ENCODE measurements at regions of chr2 and their contacts with region 1.

Region 1: DNA sequence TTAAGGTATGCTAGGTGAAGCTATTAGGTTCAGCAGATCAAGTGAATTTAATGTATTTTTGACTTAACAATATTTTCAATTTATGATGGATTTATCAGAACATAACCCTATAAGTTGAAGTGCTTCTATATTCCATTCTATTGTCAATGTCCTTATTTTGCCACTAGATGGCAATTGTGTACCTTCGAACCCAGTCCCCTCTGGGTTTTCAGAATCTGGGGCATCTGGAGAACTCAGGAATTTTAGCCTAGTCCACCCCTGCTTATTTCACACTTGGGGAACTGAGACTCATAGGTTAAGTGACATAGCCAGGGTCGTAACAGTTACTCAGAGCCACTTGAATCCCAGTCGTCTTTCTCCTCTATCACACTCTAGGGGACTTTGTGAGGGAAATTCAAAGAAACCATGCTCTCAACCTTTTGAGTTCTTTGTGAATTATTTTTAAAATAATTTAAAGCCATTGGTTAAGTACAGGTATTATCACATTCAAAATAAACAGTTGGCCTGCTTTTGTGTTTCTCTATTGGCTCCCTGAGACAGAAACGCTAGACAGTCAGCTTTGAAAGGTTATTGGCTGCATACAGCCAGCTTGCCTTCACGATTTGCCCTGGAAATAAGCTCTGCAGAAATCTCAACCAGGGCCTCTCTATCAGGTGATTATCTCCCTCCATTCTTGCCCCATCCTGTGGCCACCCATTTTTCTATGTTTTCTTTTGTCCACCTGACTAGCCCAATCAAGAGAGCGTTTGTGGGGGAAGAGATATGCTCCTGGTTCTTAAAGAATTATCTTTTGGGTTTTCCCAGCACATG is 145.0 kb downstream of the TTC27 start:
- DNase-seq: peak; percentile 75
- H3K4me3 ChIP-seq: no peak overlapping the region; a peak in 1 of 4 replicates
- H3K27ac ChIP-seq: no peak overlapping the region
- H3K4me1 ChIP-seq: no peaks in the 10 kb centered on the region; a peak in 2 of 4 replicates
- H3K27me3 ChIP-seq: no peaks in the 10 kb centered on the region
- CTCF ChIP-seq: peak; percentile 98
- EP300 ChIP-seq: no peak
- RAD21 ChIP-seq: peak; percentile 100

Region 2: GRCh38 chr2:32760628-32761027 is 12.2 kb before region 1 on chr2:
- CTCF ChIA-PET with region 1: interaction called, 29 read pairs
- POLR2A ChIA-PET with region 1: no interaction called
- DNase-seq: no peak
- H3K4me3 ChIP-seq: no peak overlapping the region
- H3K27ac ChIP-seq: no peak overlapping the region
- H3K4me1 ChIP-seq: no peaks in the 10 kb centered on the region
- H3K27me3 ChIP-seq: no peaks in the 10 kb centered on the region
- CTCF ChIP-seq: no peak
- EP300 ChIP-seq: no peak
- RAD21 ChIP-seq: no peak

Region 3: GRCh38 chr2:32783469-32783868 is 10.6 kb after region 1 on chr2:
- CTCF ChIA-PET with region 1: interaction called, 24 read pairs
- POLR2A ChIA-PET with region 1: no interaction called
- DNase-seq: no peak
- H3K4me3 ChIP-seq: no peak overlapping the region
- H3K27ac ChIP-seq: no peak overlapping the region
- H3K4me1 ChIP-seq: no peaks in the 10 kb centered on the region
- H3K27me3 ChIP-seq: no peaks in the 10 kb centered on the region
- CTCF ChIP-seq: no peak
- EP300 ChIP-seq: no peak
- RAD21 ChIP-seq: no peak

Region 4: DNA sequence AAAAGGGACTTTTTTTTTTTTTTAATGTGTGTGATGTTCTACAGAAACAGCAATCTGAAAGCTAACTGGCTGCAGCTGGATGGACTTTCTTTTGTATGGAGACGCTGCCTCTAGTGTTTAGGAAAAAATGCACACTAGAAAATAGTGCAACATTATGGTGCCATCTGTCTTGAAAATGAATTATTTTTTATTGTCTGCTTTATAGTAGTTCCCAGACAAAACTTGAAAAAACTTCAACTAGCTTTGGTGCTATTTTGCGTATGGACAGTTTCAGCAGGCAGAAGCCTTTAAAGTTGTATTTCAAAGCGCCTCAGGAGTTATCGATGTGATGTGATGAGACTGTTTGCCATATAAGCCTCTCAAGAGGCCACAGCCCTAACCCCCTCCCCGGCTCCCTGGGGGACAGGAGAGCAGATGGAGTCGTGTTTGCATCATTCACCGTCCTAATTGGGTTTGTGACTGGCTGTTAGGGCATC is 260.8 kb after region 1 on chr2:
- CTCF ChIA-PET with region 1: interaction called, 75 read pairs
- POLR2A ChIA-PET with region 1: no interaction called
- DNase-seq: peak; percentile 39
- H3K4me3 ChIP-seq: peak overlapping the region; percentile 38 to 46
- H3K27ac ChIP-seq: peak overlapping the region; percentile 35 to 58; a peak in 3 of 4 replicates
- H3K4me1 ChIP-seq: peaks cover 0 to 4% of the 10 kb centered on the region in 2 experiments; a peak in 3 of 4 replicates
- H3K27me3 ChIP-seq: no peaks in the 10 kb centered on the region
- CTCF ChIP-seq: peak; percentile 90
- EP300 ChIP-seq: no peak
- RAD21 ChIP-seq: peak; percentile 79

Region 5: GRCh38 chr2:33372940-33373553 is 600.2 kb after region 1 on chr2:
- CTCF ChIA-PET with region 1: interaction called, 16 read pairs
- POLR2A ChIA-PET with region 1: no interaction called
- DNase-seq: peak; percentile 49
- H3K4me3 ChIP-seq: no peak overlapping the region
- H3K27ac ChIP-seq: peak overlapping the region in 1 of 2 experiments; percentile 35; a peak in 1 of 4 replicates
- H3K4me1 ChIP-seq: no peaks in the 10 kb centered on the region
- H3K27me3 ChIP-seq: no peaks in the 10 kb centered on the region
- CTCF ChIP-seq: peak; percentile 94
- EP300 ChIP-seq: no peak
- RAD21 ChIP-seq: peak; percentile 83

Region 6: GRCh38 chr2:33583194-33583938 is 810.5 kb after region 1 on chr2:
- CTCF ChIA-PET with region 1: interaction called, 14 read pairs
- POLR2A ChIA-PET with region 1: no interaction called
- DNase-seq: peak; percentile 57
- H3K4me3 ChIP-seq: no peak overlapping the region
- H3K27ac ChIP-seq: peak overlapping the region in 1 of 2 experiments; percentile 39; a peak in 1 of 4 replicates
- H3K4me1 ChIP-seq: no peaks in the 10 kb centered on the region; a peak in 1 of 4 replicates
- H3K27me3 ChIP-seq: no peaks in the 10 kb centered on the region
- CTCF ChIP-seq: peak; percentile 99
- EP300 ChIP-seq: no peak
- RAD21 ChIP-seq: peak; percentile 89

Measured in SK-N-SH (cell line).